ENCODE measurements at regions of chr3 and their contacts with region 1.

Region 1: DNA sequence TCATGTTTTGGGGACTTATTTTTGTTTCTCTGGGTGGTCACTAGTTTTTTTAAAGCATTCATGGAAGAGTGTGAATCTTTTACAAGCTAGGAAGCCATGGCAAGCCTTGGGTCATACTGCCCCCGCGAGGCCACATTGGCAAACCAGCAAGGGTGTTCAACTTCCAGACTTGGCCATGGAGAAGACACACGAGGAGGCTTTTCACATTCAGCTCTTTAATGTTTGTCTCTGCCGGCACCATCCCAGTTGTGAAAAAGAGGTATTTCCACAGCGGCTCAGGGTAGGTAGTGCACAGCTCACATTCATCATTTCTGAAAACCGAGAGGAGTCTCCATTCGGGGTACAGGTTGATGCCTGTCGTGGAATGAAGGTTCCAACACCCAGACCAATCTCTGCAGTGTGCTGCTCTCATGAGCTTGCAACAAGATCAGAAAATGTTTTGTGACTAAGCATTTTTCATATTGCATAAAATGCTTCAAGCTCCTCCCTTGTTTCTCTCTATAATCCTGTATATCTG is 7.7 kb downstream of the CCR5 start:
- DNase-seq: peak; percentile 79
- ATAC-seq: peak; percentile 85
- H3K4me3 Mint-ChIP-seq: no peak overlapping the region
- H3K27ac Mint-ChIP-seq: no peak overlapping the region
- H3K4me1 Mint-ChIP-seq: peaks cover 35% of the 10 kb centered on the region
- H3K27me3 Mint-ChIP-seq: peaks cover 8% of the 10 kb centered on the region
- CTCF ChIP-seq: peak; percentile 54; the same call in 1 of the 2 replicates

Region 2: DNA sequence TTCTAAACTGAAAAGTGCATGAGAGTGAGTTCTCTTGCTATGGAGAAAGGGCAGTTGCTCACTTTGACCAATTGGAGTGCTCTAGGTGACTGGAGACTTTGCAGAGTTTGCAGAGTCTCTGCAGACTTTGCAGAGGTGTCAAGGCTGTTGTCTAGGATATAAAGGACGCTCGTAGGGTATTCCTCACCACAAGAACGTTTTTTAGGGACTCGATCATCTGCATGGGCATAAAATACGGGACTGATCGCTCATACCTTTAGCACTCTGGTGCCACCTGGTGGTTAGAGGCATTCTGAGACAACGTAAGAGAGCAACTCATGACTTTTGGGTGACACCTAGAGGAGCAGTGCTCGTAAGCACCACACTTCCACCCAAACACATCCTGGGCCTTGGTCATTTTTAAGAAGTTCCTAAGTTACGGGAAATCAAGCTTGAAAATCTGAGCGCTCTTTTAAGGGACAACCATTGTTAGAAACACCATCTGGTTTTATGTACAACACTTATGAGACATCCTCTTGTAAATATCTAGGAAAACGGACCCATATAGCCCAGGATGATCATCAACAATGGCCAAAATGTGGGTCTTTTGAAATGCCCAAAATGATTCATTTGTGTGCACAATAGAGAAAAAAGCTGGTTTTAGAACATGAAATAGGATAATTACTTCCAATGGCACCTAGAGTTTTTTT is 299.6 kb before region 1 on chr3:
- CTCF ChIA-PET with region 1: interaction called, 14 read pairs
- POLR2A ChIA-PET with region 1: no interaction called
- DNase-seq: peak; percentile 94
- ATAC-seq: peak; percentile 99
- H3K4me3 Mint-ChIP-seq: peak overlapping the region; percentile 52
- H3K27ac Mint-ChIP-seq: no peak overlapping the region
- H3K4me1 Mint-ChIP-seq: no peaks in the 10 kb centered on the region
- H3K27me3 Mint-ChIP-seq: peaks cover 10% of the 10 kb centered on the region; the same call in 1 of the 2 replicates
- CTCF ChIP-seq: peak; percentile 68; the same call in 1 of the 2 replicates

Region 3: DNA sequence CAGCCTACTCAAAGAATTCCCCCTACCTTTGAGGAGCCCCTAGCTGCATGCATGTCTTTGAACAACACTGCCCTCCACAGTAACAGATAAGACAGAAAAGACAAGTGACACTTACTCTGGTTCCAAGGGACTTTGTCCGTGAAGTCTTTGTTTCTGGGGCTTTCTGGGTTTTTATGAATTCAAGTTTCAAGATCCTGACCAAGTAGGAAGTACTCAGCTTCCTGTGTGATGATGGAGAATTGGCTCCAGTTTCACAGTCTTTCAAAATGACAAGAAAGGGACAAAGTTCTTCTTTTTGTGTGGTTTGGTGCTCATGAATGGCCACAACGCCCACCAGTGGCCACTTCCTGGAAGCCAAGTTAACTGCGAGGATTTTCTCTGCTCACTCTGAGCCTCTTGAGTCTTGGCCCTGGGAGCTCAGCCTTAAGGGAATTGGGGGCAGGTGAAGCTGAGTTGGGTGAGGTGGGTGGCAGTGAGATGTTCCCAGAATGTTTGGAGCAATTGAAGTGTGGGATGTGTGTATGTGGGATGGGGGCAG is 170.2 kb before region 1 on chr3 and contains the start of gene CCR1:
- CTCF ChIA-PET with region 1: interaction called, 17 read pairs
- POLR2A ChIA-PET with region 1: no interaction called
- DNase-seq: peak; percentile 50
- ATAC-seq: peak; percentile 81
- H3K4me3 Mint-ChIP-seq: no peak within 1 kb of the TSS
- H3K27ac Mint-ChIP-seq: no peak within 1 kb of the TSS
- H3K4me1 Mint-ChIP-seq: peaks cover 15% of the 10 kb centered on the region
- H3K27me3 Mint-ChIP-seq: no peaks in the 10 kb centered on the region
- CTCF ChIP-seq: 0 out of 2 replicates have a peak, but pooled peaks have one; percentile 11
- total RNA-seq, gene CCR1: not detected in 3 replicates

Region 4: GRCh38 chr3:46214751-46215352 is 163.6 kb before region 1 on chr3:
- CTCF ChIA-PET with region 1: interaction called, 27 read pairs
- POLR2A ChIA-PET with region 1: no interaction called
- DNase-seq: peak; percentile 63
- ATAC-seq: peak; percentile 97
- H3K4me3 Mint-ChIP-seq: no peak overlapping the region
- H3K27ac Mint-ChIP-seq: no peak overlapping the region
- H3K4me1 Mint-ChIP-seq: 0 out of 2 replicates have a peak, but pooled peaks cover 4% of the 10 kb centered on the region
- H3K27me3 Mint-ChIP-seq: peaks cover 2% of the 10 kb centered on the region; the same call in 1 of the 2 replicates
- CTCF ChIP-seq: no peak

Region 5: GRCh38 chr3:46276502-46277099 is 101.9 kb before region 1 on chr3:
- CTCF ChIA-PET with region 1: interaction called, 20 read pairs
- POLR2A ChIA-PET with region 1: no interaction called
- DNase-seq: peak; percentile 79
- ATAC-seq: peak; percentile 95
- H3K4me3 Mint-ChIP-seq: no peak overlapping the region
- H3K27ac Mint-ChIP-seq: no peak overlapping the region
- H3K4me1 Mint-ChIP-seq: no peaks in the 10 kb centered on the region
- H3K27me3 Mint-ChIP-seq: peaks cover 9% of the 10 kb centered on the region
- CTCF ChIP-seq: peak; percentile 67

Region 6: DNA sequence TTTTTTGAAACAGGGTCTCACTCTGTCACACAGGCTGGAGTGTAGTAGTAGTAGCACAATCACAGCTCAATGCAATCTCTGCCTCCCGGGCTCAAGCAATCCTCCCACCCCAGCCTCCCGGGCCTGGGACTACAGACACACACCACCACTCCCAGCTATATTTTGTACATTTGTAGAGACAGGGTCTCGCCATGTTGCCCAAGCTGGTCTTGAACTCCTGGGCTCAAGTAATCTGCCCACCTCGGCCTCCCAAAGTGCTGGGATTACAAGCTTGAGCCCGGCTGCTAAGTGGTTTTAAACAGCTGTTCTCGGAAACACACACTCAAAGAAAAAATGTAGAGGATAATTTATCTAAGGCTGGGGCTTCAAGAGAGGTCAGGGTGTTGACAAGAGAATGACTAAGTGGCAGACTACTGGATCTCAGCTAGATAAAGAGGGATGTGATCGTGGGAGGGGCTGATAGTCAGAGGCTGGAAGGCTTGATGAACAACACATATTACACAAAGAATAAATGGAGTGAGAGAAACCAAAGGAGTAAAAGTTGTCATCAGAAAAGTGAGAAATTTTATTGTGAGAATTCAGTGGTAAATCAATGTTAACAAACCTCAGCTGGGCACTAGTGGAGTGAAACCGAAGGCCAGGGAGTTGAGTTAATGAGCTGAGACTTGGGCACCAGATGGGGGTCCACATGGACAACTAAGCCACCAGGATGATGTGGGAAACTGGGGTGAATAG is 21.7 kb after region 1 on chr3:
- CTCF ChIA-PET with region 1: interaction called, 10 read pairs
- POLR2A ChIA-PET with region 1: no interaction called
- DNase-seq: no peak
- ATAC-seq: no peak
- H3K4me3 Mint-ChIP-seq: no peak overlapping the region
- H3K27ac Mint-ChIP-seq: no peak overlapping the region
- H3K4me1 Mint-ChIP-seq: peaks cover 6% of the 10 kb centered on the region; the same call in 1 of the 2 replicates
- H3K27me3 Mint-ChIP-seq: no peaks in the 10 kb centered on the region; the same call in 1 of the 2 replicates
- CTCF ChIP-seq: no peak

Region 7: GRCh38 chr3:46423588-46423987 is 45.1 kb after region 1 on chr3:
- CTCF ChIA-PET with region 1: interaction called, 17 read pairs
- POLR2A ChIA-PET with region 1: no interaction called
- DNase-seq: no peak
- ATAC-seq: no peak
- H3K4me3 Mint-ChIP-seq: no peak overlapping the region
- H3K27ac Mint-ChIP-seq: no peak overlapping the region
- H3K4me1 Mint-ChIP-seq: peaks cover 4% of the 10 kb centered on the region
- H3K27me3 Mint-ChIP-seq: no peaks in the 10 kb centered on the region
- CTCF ChIP-seq: no peak

Region 8: GRCh38 chr3:46455231-46456095 is 77.0 kb after region 1 on chr3:
- CTCF ChIA-PET with region 1: no interaction called
- POLR2A ChIA-PET with region 1: no interaction called
- DNase-seq: no peak
- ATAC-seq: no peak
- H3K4me3 Mint-ChIP-seq: no peak overlapping the region
- H3K27ac Mint-ChIP-seq: no peak overlapping the region
- H3K4me1 Mint-ChIP-seq: no peaks in the 10 kb centered on the region
- H3K27me3 Mint-ChIP-seq: peaks cover 3% of the 10 kb centered on the region; the same call in 1 of the 2 replicates
- CTCF ChIP-seq: no peak